ENCODE measurements at regions of chr3 and their contacts with region 1.

Region 1: DNA sequence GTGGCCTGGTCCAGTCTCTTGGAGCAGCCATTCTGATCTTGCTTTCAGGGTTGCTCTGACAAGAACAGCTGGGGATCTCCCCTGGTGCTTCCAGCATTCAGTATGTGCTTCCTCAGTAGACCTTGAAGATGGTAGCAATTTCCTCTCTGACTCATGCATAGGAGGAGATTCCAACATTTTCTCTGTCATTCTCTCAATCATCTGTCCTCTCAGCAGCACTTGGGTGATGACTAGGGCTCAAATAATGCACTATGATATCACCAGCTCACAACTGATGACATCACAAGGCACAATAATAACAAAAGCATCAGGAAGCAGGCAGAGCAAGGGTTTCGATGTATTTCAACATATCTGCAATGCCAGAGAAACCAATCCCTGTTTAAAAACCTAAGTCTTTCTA is 52.7 kb downstream of the NFKBIZ start:
- DNase-seq: peak; percentile 98
- H3K4me3 ChIP-seq: no peak overlapping the region
- H3K27ac ChIP-seq: peak overlapping the region; percentile 78
- H3K4me1 ChIP-seq: peaks cover 6% of the 10 kb centered on the region
- H3K27me3 ChIP-seq: no peaks in the 10 kb centered on the region
- CTCF ChIP-seq: no peak

Region 2: GRCh38 chr3:101561630-101562328 is 340.3 kb before region 1 on chr3 and contains the start of gene TRMT10C:
- CTCF ChIA-PET with region 1: no interaction called
- dilution Hi-C with region 1: no loop called
- in situ Hi-C with region 1: no loop called
- intact Hi-C with region 1: no loop called
- DNase-seq: peak; percentile 91
- H3K4me3 ChIP-seq: peak within 1 kb of the TSS; percentile 71 to 97 (median 92)
- H3K27ac ChIP-seq: peak within 1 kb of the TSS; percentile 89
- H3K4me1 ChIP-seq: peaks cover 14% of the 10 kb centered on the region
- H3K27me3 ChIP-seq: no peaks in the 10 kb centered on the region
- CTCF ChIP-seq: no peak
- total RNA-seq, gene TRMT10C: 21.8 to 27.9 TPM

Region 3: DNA sequence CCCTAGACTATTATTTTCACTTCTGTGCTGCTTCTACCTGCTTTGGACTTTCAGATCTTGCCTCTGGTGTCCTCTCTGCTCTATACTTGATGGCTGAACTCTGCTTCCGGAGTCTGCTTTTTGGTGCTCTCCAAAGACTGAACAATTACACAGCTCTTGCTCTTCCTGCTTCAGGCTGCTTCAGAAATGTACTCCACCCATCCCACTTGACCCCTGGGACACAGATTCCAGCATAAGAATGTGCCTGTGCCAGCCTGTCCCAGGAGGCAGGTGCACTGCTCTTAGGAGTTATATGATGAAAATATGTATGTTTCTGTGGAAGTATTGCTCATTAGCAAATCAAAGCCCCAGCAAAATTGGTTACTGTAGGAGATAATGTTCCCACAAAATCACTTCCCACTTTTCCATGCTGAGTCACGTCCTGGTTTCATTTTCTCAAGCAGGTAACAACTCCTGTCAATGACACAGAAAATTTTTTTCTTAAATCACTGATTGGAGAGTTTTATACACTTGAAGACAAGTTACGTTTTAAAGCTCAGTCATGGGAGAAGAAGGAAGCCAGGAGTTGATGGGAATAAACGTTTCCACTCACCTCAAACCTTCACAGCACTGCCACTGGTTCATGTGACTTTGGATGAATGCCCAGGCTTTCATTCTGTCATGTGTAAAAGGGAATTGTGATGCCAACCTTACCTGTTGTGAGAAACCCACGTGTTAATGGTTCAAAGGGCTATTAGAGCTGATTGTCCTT is 293.3 kb after region 1 on chr3:
- CTCF ChIA-PET with region 1: no interaction called
- dilution Hi-C with region 1: no loop called
- in situ Hi-C with region 1: no loop called
- intact Hi-C with region 1: loop called (anchors 1 kb)
- DNase-seq: peak; percentile 96
- H3K4me3 ChIP-seq: no peak overlapping the region
- H3K27ac ChIP-seq: peak overlapping the region; percentile 94
- H3K4me1 ChIP-seq: peaks cover 62% of the 10 kb centered on the region
- H3K27me3 ChIP-seq: no peaks in the 10 kb centered on the region
- CTCF ChIP-seq: no peak

Measured in mammary epithelial cell (primary cell).